ENCODE measurements at regions of chr12 and their contacts with region 1.

Region 1: GRCh38 chr12:111812881-111813741 is 28.9 kb upstream of the MAPKAPK5 start:
- DNase-seq: peak; percentile 57 to 65 (median 62)
- H3K4me3 ChIP-seq: no peak overlapping the region
- H3K4me3 Mint-ChIP-seq: peak overlapping the region in 4 of 8 donors; percentile 15 to 39 (median 24)
- H3K27ac ChIP-seq: no peak overlapping the region
- H3K27ac Mint-ChIP-seq: peak overlapping the region in 1 of 7 donors; percentile 1
- H3K4me1 ChIP-seq: peaks cover 10% of the 10 kb centered on the region
- H3K4me1 Mint-ChIP-seq: peaks cover 6 to 10% (median 8%) of the 10 kb centered on the region in 4 donors
- H3K27me3 ChIP-seq: no peaks in the 10 kb centered on the region
- H3K27me3 Mint-ChIP-seq: peaks cover 0 to 7% of the 10 kb centered on the region in 2 donors

Region 2: DNA sequence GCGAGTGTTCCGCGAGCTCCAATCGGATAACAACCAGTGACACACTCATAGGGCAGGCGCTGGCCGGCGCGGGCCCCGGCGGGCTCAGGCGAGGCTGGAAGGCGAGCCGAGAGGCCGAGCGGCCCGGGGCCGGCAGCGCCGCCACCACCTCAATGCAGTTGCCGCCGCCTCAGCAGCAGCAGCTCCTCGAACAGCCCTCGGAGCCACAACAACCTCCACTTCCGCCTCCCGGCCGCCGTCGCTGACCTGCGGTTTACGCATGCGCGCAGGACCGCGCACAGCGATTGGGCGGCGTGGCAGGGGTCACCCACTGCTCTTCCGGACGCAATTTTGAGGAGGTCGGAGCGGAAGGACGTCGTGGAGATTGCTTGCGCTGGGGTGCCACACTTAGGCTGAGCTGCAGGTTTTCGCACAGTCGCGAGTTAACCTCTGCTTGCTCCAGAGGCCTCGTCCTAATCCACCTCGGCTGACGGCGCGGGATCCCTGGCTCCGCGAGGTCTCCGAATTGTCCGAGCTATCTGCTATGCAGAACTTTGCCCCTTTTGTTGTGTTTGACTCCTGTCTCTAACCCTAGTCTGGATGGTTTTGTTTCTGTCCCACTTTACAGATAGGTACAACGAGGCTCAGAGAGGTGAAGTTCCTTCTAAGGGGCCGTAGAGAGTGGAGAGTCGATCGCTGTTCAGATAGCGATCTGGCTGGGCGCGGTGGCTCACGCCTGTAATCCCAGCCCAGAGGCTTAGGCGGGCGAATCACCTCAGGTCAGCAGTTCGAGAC is 127.2 kb before region 1 on chr12 and contains the starts of genes ACAD10 and BRAP:
- CTCF ChIA-PET with region 1: interaction called, 6 read pairs
- POLR2A ChIA-PET with region 1: interaction called, 5 read pairs
- intact Hi-C with region 1: loop called (anchors 1 kb)
- DNase-seq: peak; percentile 89 to 98 (median 94)
- H3K4me3 ChIP-seq: peak within 1 kb of the TSS; percentile 68 to 91
- H3K4me3 Mint-ChIP-seq: peak within 1 kb of the TSS; percentile 90 to 99 (median 96)
- H3K27ac ChIP-seq: peak within 1 kb of the TSS; percentile 83
- H3K27ac Mint-ChIP-seq: peak within 1 kb of the TSS; percentile 81 to 98 (median 97)
- H3K4me1 ChIP-seq: peaks cover 28% of the 10 kb centered on the region
- H3K4me1 Mint-ChIP-seq: peaks cover 17 to 64% (median 41%) of the 10 kb centered on the region in 4 donors
- H3K27me3 ChIP-seq: no peaks in the 10 kb centered on the region
- H3K27me3 Mint-ChIP-seq: no peaks in the 10 kb centered on the region
- total RNA-seq, gene ACAD10: 52.2 to 58.3 TPM
- total RNA-seq, gene BRAP: 25.9 to 27.5 TPM

Region 3: GRCh38 chr12:111753144-111753881 is 59.8 kb before region 1 on chr12:
- CTCF ChIA-PET with region 1: interaction called, 7 read pairs
- POLR2A ChIA-PET with region 1: no interaction called
- intact Hi-C with region 1: loop called (anchors 1 kb)
- DNase-seq: no peak
- H3K4me3 ChIP-seq: no peak overlapping the region
- H3K4me3 Mint-ChIP-seq: no peak overlapping the region
- H3K27ac ChIP-seq: no peak overlapping the region
- H3K27ac Mint-ChIP-seq: no peak overlapping the region
- H3K4me1 ChIP-seq: no peaks in the 10 kb centered on the region
- H3K4me1 Mint-ChIP-seq: peaks cover 0 to 4% (median 0%) of the 10 kb centered on the region in 4 donors
- H3K27me3 ChIP-seq: no peaks in the 10 kb centered on the region
- H3K27me3 Mint-ChIP-seq: no peaks in the 10 kb centered on the region

Region 4: GRCh38 chr12:111826316-111826715 is 13.2 kb after region 1 on chr12:
- CTCF ChIA-PET with region 1: interaction called, 10 read pairs
- POLR2A ChIA-PET with region 1: interaction called, 3 read pairs
- intact Hi-C with region 1: no loop called
- DNase-seq: no peak
- H3K4me3 ChIP-seq: no peak overlapping the region
- H3K4me3 Mint-ChIP-seq: no peak overlapping the region
- H3K27ac ChIP-seq: no peak overlapping the region
- H3K27ac Mint-ChIP-seq: no peak overlapping the region
- H3K4me1 ChIP-seq: no peaks in the 10 kb centered on the region
- H3K4me1 Mint-ChIP-seq: peaks cover 0 to 4% (median 0%) of the 10 kb centered on the region in 4 donors
- H3K27me3 ChIP-seq: no peaks in the 10 kb centered on the region
- H3K27me3 Mint-ChIP-seq: peaks cover 3 to 23% of the 10 kb centered on the region in 2 donors

Measured in CD4-positive, alpha-beta memory T cell (primary cell).